Activated naive CD4-positive, alpha-beta T cell treated with anti-CD3 and anti-CD28 coated beads for 36 hours (primary cell): ENCODE measurements at regions of chr9 and their contacts with region 1.

Region 1: GRCh38 chr9:113446323-113446740 is 17.2 kb upstream of the RGS3 start:
- DNase-seq: peak; percentile 22
- H3K4me3 Mint-ChIP-seq: no peak overlapping the region
- H3K27ac Mint-ChIP-seq: no peak overlapping the region
- H3K4me1 Mint-ChIP-seq: no peaks in the 10 kb centered on the region
- H3K27me3 Mint-ChIP-seq: no peaks in the 10 kb centered on the region

Region 2: DNA sequence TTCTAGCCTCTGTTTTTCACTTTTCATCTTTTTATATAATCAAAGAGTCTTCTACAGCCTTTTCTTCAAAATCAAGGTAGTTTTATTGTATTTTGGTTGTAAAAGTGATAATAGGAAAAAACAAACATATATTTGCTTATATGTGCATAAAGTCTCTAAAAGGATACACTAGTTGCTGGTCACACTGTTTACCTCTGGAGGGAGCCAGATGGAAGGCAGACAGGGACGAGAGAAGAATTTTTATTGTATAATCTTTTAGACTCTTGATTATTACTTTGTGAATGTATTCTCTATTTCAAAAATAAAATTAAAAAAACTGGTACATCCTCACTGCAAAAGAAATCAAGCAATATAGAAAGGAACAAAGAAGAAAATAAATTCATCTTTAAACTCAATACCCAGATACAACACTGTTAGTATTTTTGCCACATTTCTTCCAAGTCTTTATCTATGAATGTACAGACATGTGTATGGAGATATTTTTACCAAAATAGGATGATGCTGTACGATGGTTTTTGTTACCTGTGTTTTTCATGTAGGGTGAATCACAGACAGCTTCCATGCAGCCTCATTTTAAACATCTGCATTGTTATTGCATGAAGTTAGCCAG is 137.0 kb before region 1 on chr9:
- CTCF ChIA-PET with region 1: interaction called, 11 read pairs
- intact Hi-C with region 1: loop called (anchors 2 kb)
- DNase-seq: peak; percentile 53
- H3K4me3 Mint-ChIP-seq: no peak overlapping the region
- H3K27ac Mint-ChIP-seq: no peak overlapping the region
- H3K4me1 Mint-ChIP-seq: no peaks in the 10 kb centered on the region
- H3K27me3 Mint-ChIP-seq: no peaks in the 10 kb centered on the region

Region 3: GRCh38 chr9:113463418-113464285 is 17.3 kb after region 1 on chr9 and contains the start of gene RGS3:
- CTCF ChIA-PET with region 1: no interaction called
- intact Hi-C with region 1: no loop called
- DNase-seq: no peak
- H3K4me3 Mint-ChIP-seq: no peak within 1 kb of the TSS
- H3K27ac Mint-ChIP-seq: no peak within 1 kb of the TSS
- H3K4me1 Mint-ChIP-seq: peaks cover 2% of the 10 kb centered on the region
- H3K27me3 Mint-ChIP-seq: no peaks in the 10 kb centered on the region
- total RNA-seq, gene RGS3: 11.9 to 12.6 TPM

Region 4: GRCh38 chr9:113556877-113557593 is 110.7 kb after region 1 on chr9:
- CTCF ChIA-PET with region 1: no interaction called
- intact Hi-C with region 1: no loop called
- DNase-seq: no peak
- H3K4me3 Mint-ChIP-seq: no peak overlapping the region
- H3K27ac Mint-ChIP-seq: no peak overlapping the region
- H3K4me1 Mint-ChIP-seq: peaks cover 24% of the 10 kb centered on the region
- H3K27me3 Mint-ChIP-seq: no peaks in the 10 kb centered on the region

Region 5: GRCh38 chr9:113901221-113901688 is 454.9 kb after region 1 on chr9:
- CTCF ChIA-PET with region 1: no interaction called
- intact Hi-C with region 1: no loop called
- DNase-seq: no peak
- H3K4me3 Mint-ChIP-seq: no peak overlapping the region
- H3K27ac Mint-ChIP-seq: no peak overlapping the region
- H3K4me1 Mint-ChIP-seq: no peaks in the 10 kb centered on the region
- H3K27me3 Mint-ChIP-seq: peaks cover 3% of the 10 kb centered on the region